GM12878 (cell line): ENCODE measurements at regions of chr1 and their contacts with region 1.

Region 1: GRCh38 chr1:155208541-155209311 is at the start of gene MTX1:
- DNase-seq: no peak
- ATAC-seq: peak; percentile 93
- H3K4me3 ChIP-seq: peak within 1 kb of the TSS; percentile 98
- H3K27ac ChIP-seq: peak within 1 kb of the TSS; percentile 81
- H3K4me1 ChIP-seq: peaks cover 19% of the 10 kb centered on the region
- H3K27me3 ChIP-seq: no peaks in the 10 kb centered on the region
- CTCF ChIP-seq: no peak
- EP300 ChIP-seq: peak in 1 of 2 experiments; percentile 58; a peak in 1 of 4 replicates
- POLR2A ChIP-seq: peak; percentile 92
- RAD21 ChIP-seq: no peak
- polyA plus RNA-seq, gene MTX1: 15.8 to 25.5 TPM

Region 2: GRCh38 chr1:155193275-155193990 is 15.3 kb before region 1 on chr1:
- CTCF ChIA-PET with region 1: interaction called, 58 read pairs
- POLR2A ChIA-PET with region 1: interaction called, 26 read pairs
- RAD21 ChIA-PET with region 1: interaction called, 24 read pairs
- SMC1A ChIA-PET with region 1: interaction called, 5 read pairs
- in situ Hi-C with region 1: no loop called
- intact Hi-C with region 1: no loop called
- DNase-seq: no peak
- ATAC-seq: peak; percentile 93
- H3K4me3 ChIP-seq: peak overlapping the region; percentile 77
- H3K27ac ChIP-seq: peak overlapping the region; percentile 22
- H3K4me1 ChIP-seq: peaks cover 16% of the 10 kb centered on the region
- H3K27me3 ChIP-seq: no peaks in the 10 kb centered on the region
- CTCF ChIP-seq: peak; percentile 96 to 99 (median 99)
- EP300 ChIP-seq: no peak
- POLR2A ChIP-seq: peak; percentile 47; the same call in 1 of the 2 replicates
- RAD21 ChIP-seq: peak; percentile 68

Region 3: DNA sequence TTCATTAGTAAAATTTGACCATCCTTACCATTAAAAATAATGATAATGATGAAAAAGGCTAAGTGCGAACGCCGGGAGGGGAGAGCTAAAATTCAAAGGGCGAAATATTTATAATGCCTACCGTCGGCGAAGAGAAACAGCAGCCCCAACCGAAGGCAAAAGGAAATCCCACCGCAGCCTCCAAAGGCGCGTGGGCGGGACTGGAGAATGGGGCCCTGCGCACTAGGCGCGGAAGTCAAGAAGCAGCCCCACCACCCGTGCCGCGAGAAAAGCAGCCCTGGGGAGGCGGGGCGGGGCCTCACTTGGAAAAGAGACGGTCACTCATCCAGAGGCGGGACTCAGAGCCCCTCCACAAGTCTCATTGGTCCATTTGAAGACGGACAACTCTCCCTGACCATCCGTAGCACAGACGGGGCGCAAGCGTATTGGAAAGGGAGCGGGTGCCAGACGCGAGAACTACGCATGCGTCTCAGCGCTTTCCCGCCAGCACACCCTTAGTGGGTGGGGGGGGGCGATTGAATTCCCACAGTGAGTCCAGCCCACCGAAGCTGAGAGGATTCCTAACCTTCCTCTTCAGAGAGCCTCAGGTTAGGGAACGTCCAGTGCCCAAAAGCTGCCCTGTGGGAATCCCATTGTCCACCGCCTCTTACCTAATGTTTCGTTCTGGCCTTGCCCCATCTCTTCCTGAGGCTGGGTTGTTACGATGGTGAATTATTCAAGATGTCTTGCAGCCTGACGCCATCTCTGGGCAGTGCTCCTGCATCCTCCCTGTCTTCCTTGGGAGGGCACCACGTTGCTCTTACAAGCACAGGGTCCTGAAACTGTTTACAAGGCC is 18.8 kb after region 1 on chr1:
- CTCF ChIA-PET with region 1: interaction called, 154 read pairs
- POLR2A ChIA-PET with region 1: interaction called, 84 read pairs
- RAD21 ChIA-PET with region 1: interaction called, 85 read pairs
- SMC1A ChIA-PET with region 1: interaction called, 89 read pairs
- in situ Hi-C with region 1: no loop called
- intact Hi-C with region 1: loop called (anchors 1 kb)
- DNase-seq: peak; percentile 96
- ATAC-seq: peak; percentile 95
- H3K4me3 ChIP-seq: peak overlapping the region; percentile 67
- H3K27ac ChIP-seq: peak overlapping the region; percentile 96
- H3K4me1 ChIP-seq: peaks cover 36% of the 10 kb centered on the region
- H3K27me3 ChIP-seq: no peaks in the 10 kb centered on the region
- CTCF ChIP-seq: no peak
- EP300 ChIP-seq: 0 out of 4 replicates have a peak, but pooled peaks of 1 of the 2 experiments have one; percentile 16
- POLR2A ChIP-seq: peak; percentile 79
- RAD21 ChIP-seq: no peak

Region 4: DNA sequence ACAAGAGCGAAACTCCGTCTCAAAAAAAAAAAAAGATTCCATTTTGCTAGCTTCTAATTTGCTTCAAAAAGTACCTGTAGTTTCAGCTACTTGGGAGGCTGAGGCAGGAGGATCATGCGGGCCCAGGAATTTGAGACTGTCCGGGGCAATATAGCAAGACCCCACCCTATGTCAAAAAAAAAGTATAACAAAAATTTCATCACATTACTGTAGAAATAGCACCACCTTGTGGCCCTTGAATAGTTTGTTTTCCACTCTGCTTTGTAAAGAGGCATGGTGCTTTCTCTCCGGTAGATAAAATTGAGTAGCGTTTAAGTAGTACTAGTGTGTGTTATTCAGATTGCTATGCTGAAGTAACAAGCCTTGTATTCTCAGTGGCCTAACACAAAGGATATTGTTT is 383.0 kb after region 1 on chr1:
- CTCF ChIA-PET with region 1: no interaction called
- POLR2A ChIA-PET with region 1: no interaction called
- RAD21 ChIA-PET with region 1: no interaction called
- SMC1A ChIA-PET with region 1: no interaction called
- in situ Hi-C with region 1: no loop called
- intact Hi-C with region 1: loop called (anchors 5 kb)
- DNase-seq: peak; percentile 24
- ATAC-seq: peak; percentile 79
- H3K4me3 ChIP-seq: no peak overlapping the region
- H3K27ac ChIP-seq: no peak overlapping the region
- H3K4me1 ChIP-seq: no peaks in the 10 kb centered on the region
- H3K27me3 ChIP-seq: no peaks in the 10 kb centered on the region
- CTCF ChIP-seq: peak; percentile 43 to 60 (median 50); a peak in 5 of 6 replicates
- EP300 ChIP-seq: no peak
- POLR2A ChIP-seq: no peak
- RAD21 ChIP-seq: peak; percentile 72